BJ (cell line): ENCODE measurements at regions of chr6 and their contacts with region 1.

Region 1: GRCh38 chr6:89371849-89372505 is 19.5 kb upstream of the UBE2J1 start:
- DNase-seq: no peak
- H3K4me3 ChIP-seq: no peak overlapping the region
- H3K27me3 ChIP-seq: peaks cover 3% of the 10 kb centered on the region; the same call in 1 of the 2 replicates
- CTCF ChIP-seq: peak; percentile 98

Region 2: DNA sequence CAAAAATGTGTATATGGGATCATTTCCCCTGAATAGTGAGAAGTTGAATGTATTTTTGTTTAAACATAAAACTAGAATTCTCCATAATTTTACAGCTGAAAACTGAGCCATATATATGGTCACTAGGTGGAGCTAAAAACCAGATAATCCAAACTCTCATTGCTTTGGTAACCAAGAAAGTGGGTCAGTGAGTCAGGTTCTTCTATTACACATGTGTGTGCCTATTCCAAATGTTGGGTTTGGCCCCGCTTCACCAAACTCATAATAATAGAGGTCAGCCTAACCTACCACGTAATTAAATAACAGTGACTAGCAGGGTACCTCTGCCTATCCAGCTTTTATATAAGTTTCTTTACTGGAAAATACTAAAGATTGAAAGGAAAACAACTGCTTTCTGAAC is 389.3 kb before region 1 on chr6:
- CTCF ChIA-PET with region 1: interaction called, 25 read pairs
- POLR2A ChIA-PET with region 1: no interaction called
- DNase-seq: peak; percentile 47
- H3K4me3 ChIP-seq: no peak overlapping the region
- H3K27me3 ChIP-seq: peaks cover 2% of the 10 kb centered on the region; the same call in 1 of the 2 replicates
- CTCF ChIP-seq: peak; percentile 63

Region 3: DNA sequence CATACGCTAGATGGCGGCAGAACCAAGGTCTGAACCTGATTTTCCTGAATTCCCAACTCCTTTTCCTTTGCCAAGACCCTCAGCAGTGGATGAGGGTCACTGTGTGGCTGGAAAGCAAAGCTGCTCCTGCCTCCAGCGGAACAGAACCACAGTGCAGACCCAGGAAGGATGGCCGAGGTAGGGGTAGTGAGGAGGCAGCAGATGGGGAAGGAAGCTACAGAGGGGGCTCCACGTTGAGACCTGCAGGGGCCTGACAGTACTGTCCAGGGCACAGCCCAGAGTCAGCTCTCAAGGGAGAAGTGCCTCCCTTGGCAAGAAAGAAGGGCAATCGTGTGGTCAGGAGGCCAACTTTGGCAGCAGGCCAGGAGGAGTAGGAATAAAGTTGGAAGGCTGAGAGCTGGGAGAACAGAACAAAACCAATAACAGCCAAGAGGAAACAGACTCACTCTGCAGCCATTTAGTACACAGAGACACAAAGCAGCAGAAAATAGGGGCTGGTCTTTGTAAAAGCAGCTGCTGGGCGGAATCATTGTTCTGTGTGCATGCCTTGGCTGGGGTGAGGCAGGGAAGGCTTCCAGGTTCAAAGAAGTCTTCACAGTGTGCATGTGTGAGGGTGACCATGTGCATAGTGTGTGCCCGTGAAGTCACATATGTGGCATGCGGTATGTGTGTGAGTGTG is 60.0 kb before region 1 on chr6:
- CTCF ChIA-PET with region 1: interaction called, 41 read pairs
- POLR2A ChIA-PET with region 1: no interaction called
- DNase-seq: no peak
- H3K4me3 ChIP-seq: no peak overlapping the region
- H3K27me3 ChIP-seq: peaks cover 3% of the 10 kb centered on the region
- CTCF ChIP-seq: peak; percentile 69; the same call in 1 of the 2 replicates

Region 4: GRCh38 chr6:89352278-89353117 is 19.5 kb before region 1 on chr6 and contains the start of gene UBE2J1:
- CTCF ChIA-PET with region 1: interaction called, 16 read pairs
- POLR2A ChIA-PET with region 1: no interaction called
- DNase-seq: peak; percentile 63
- H3K4me3 ChIP-seq: peak within 1 kb of the TSS; percentile 77
- H3K27me3 ChIP-seq: no peaks in the 10 kb centered on the region; the same call in 1 of the 2 replicates
- CTCF ChIP-seq: no peak
- polyA plus RNA-seq, gene UBE2J1: 27.1 and 43.3 TPM in 2 replicates

Region 5: GRCh38 chr6:89360415-89360999 is 11.5 kb before region 1 on chr6:
- CTCF ChIA-PET with region 1: interaction called, 23 read pairs
- POLR2A ChIA-PET with region 1: no interaction called
- DNase-seq: peak; percentile 47
- H3K4me3 ChIP-seq: no peak overlapping the region
- H3K27me3 ChIP-seq: peaks cover 1% of the 10 kb centered on the region; the same call in 1 of the 2 replicates
- CTCF ChIP-seq: no peak

Region 6: DNA sequence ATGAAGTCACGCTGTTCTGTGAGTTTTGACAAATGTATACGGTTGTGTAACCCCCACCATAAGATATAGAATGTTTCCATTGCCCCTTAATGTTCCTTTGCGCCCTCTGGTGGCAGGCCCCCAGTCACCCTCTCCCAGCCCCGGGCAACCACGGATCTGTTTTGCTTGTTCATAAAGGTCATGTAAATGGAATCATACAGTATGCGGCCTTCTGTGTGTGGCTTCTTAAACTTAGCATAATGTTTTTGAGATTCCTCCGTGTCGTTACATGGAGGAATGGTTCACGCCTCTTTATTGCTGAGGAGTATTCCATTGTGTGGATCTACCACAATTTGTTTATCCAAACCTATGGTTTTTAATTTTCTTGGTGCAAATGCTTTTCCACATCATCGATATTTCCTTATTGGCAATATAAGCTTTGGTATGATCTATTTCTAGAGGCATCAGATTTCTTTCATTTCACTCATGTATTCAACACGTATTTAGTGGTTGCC is 238.2 kb after region 1 on chr6:
- CTCF ChIA-PET with region 1: interaction called, 12 read pairs
- POLR2A ChIA-PET with region 1: no interaction called
- DNase-seq: no peak
- H3K4me3 ChIP-seq: no peak overlapping the region
- H3K27me3 ChIP-seq: no peaks in the 10 kb centered on the region
- CTCF ChIP-seq: peak; percentile 81